ENCODE measurements at regions of chr16 and their contacts with region 1.

Region 1: DNA sequence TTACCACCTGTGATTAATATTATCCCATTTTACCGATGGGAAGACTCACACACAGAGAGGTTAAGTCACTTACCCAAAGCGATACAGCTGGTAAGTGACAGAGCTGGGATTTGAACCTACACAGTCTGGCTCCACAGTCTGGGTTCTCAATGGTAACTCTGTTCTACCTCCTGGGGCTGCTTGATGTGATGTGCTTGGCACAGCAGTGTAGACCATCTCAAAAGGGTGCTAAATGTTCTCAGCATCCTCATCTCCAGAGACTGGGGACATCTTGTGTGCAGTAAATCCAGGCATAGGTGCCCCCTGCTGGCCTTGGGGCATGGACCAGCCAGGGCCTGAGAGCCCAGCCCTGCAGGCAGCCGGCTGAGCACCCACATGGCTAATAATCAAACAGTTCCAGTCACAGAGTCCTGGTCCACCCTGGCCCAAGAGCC is 15.4 kb upstream of the KATNB1 start:
- DNase-seq: peak; percentile 54 to 62 (median 55)
- H3K4me3 ChIP-seq: no peak overlapping the region
- H3K4me3 Mint-ChIP-seq: no peak overlapping the region
- H3K27ac ChIP-seq: no peak overlapping the region
- H3K27ac Mint-ChIP-seq: no peak overlapping the region
- H3K4me1 ChIP-seq: no peaks in the 10 kb centered on the region
- H3K4me1 Mint-ChIP-seq: peaks cover 3% of the 10 kb centered on the region
- H3K27me3 ChIP-seq: no peaks in the 10 kb centered on the region
- H3K27me3 Mint-ChIP-seq: peaks cover 0 to 6% (median 3%) of the 10 kb centered on the region in 3 donors
- CTCF ChIP-seq: peak; percentile 71

Region 2: GRCh38 chr16:57576429-57576870 is 143.7 kb before region 1 on chr16:
- intact Hi-C with region 1: loop called in 1 of 2 experiments (anchors 5 kb)
- DNase-seq: peak; percentile 61 to 67 (median 65)
- H3K4me3 ChIP-seq: no peak overlapping the region
- H3K4me3 Mint-ChIP-seq: peak overlapping the region in 1 of 2 donors; percentile 21
- H3K27ac ChIP-seq: no peak overlapping the region
- H3K27ac Mint-ChIP-seq: peak overlapping the region in 1 of 7 donors; percentile 63
- H3K4me1 ChIP-seq: peaks cover 2 to 3% of the 10 kb centered on the region in 2 donors
- H3K4me1 Mint-ChIP-seq: peaks cover 7% of the 10 kb centered on the region
- H3K27me3 ChIP-seq: peaks cover 0 to 17% of the 10 kb centered on the region in 2 donors
- H3K27me3 Mint-ChIP-seq: peaks cover 23 to 44% (median 27%) of the 10 kb centered on the region in 3 donors
- CTCF ChIP-seq: peak; percentile 95

Region 3: DNA sequence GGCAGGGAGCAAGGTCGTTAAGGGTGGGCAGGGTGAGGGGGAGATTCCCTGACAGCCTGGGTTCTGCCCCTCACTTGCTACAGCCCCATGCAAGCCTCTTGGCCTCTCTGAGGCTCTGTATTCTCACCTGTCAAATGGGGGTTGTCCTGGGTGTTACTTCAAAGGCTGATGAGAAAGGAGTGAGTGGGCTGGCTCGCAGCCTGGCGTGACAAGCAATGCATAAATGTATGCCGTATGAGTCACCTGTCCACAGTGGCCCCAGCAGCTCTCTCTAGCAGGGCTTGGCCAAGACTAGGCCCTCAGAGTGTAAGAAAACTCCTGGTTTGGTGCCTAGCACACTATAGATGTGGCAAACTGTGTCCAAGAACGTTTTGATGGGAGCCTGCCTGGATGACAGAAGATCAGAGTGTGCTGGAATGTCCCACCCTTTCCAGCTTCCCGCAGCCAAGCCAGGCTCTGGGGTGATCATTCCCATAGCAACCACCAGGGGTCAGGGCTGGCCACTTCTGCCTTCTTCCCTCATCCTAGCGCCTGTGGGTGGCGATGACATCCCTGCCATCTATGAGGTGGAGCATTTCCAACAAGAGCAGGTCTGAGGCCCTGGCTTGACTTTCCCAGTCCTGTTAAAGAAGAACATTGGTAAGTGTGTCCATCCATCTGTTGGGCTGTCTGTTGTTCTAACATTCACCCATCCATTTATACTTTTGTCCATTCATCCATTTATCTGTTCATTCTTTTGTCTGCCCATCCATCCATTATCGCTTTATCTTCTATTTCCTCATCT is 128.9 kb before region 1 on chr16:
- intact Hi-C with region 1: loop called in 1 of 2 experiments (anchors 5 kb)
- DNase-seq: peak; percentile 59 to 80 (median 66)
- H3K4me3 ChIP-seq: no peak overlapping the region
- H3K4me3 Mint-ChIP-seq: peak overlapping the region in 1 of 2 donors; percentile 42
- H3K27ac ChIP-seq: no peak overlapping the region
- H3K27ac Mint-ChIP-seq: peak overlapping the region in 4 of 7 donors; percentile 23 to 76 (median 60)
- H3K4me1 ChIP-seq: peaks cover 20 to 25% of the 10 kb centered on the region in 2 donors
- H3K4me1 Mint-ChIP-seq: peaks cover 20% of the 10 kb centered on the region
- H3K27me3 ChIP-seq: peaks cover 0 to 2% of the 10 kb centered on the region in 2 donors
- H3K27me3 Mint-ChIP-seq: peaks cover 8 to 19% (median 17%) of the 10 kb centered on the region in 3 donors
- CTCF ChIP-seq: peak; percentile 96

Region 4: GRCh38 chr16:57648590-57649442 is 71.3 kb before region 1 on chr16:
- intact Hi-C with region 1: loop called in 1 of 2 experiments (anchors 2 kb)
- DNase-seq: peak; percentile 82 to 86 (median 83)
- H3K4me3 ChIP-seq: no peak overlapping the region
- H3K4me3 Mint-ChIP-seq: no peak overlapping the region
- H3K27ac ChIP-seq: peak overlapping the region; percentile 48 to 58
- H3K27ac Mint-ChIP-seq: peak overlapping the region; percentile 26 to 93 (median 83)
- H3K4me1 ChIP-seq: peaks cover 24 to 25% of the 10 kb centered on the region in 2 donors
- H3K4me1 Mint-ChIP-seq: peaks cover 25% of the 10 kb centered on the region
- H3K27me3 ChIP-seq: peaks cover 2 to 34% of the 10 kb centered on the region in 2 donors
- H3K27me3 Mint-ChIP-seq: peaks cover 23 to 39% (median 32%) of the 10 kb centered on the region in 3 donors
- CTCF ChIP-seq: peak; percentile 100

Region 5: DNA sequence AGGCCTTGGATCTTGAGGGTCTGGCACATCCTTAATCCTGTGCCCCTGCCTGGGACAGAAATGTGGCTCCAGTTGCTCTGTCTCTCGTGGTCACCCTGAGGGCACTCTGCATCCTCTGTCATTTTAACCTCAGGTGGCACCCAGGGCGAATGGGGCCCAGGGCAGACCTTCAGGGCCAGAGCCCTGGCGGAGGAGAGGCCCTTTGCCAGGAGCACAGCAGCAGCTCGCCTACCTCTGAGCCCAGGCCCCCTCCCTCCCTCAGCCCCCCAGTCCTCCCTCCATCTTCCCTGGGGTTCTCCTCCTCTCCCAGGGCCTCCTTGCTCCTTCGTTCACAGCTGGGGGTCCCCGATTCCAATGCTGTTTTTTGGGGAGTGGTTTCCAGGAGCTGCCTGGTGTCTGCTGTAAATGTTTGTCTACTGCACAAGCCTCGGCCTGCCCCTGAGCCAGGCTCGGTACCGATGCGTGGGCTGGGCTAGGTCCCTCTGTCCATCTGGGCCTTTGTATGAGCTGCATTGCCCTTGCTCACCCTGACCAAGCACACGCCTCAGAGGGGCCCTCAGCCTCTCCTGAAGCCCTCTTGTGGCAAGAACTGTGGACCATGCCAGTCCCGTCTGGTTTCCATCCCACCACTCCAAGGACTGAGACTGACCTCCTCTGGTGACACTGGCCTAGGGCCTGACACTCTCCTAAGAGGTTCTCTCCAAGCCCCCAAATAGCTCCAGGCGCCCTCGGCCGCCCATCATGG is 56.1 kb before region 1 on chr16:
- intact Hi-C with region 1: loop called in 1 of 2 experiments (anchors 5 kb)
- DNase-seq: no peak
- H3K4me3 ChIP-seq: no peak overlapping the region
- H3K4me3 Mint-ChIP-seq: no peak overlapping the region
- H3K27ac ChIP-seq: no peak overlapping the region
- H3K27ac Mint-ChIP-seq: peak overlapping the region in 6 of 7 donors; percentile 38 to 90 (median 70)
- H3K4me1 ChIP-seq: peaks cover 25 to 27% of the 10 kb centered on the region in 2 donors
- H3K4me1 Mint-ChIP-seq: peaks cover 38% of the 10 kb centered on the region
- H3K27me3 ChIP-seq: no peaks in the 10 kb centered on the region
- H3K27me3 Mint-ChIP-seq: peaks cover under 1 to 4% (median 3%) of the 10 kb centered on the region in 3 donors
- CTCF ChIP-seq: no peak

Measured in CD14-positive monocyte (primary cell).